ENCODE measurements at regions of chr17 and their contacts with region 1.

Region 1: GRCh38 chr17:75393523-75394331 is 11.8 kb downstream of the GRB2 start:
- DNase-seq: peak; percentile 97
- H3K4me3 Mint-ChIP-seq: peak overlapping the region; percentile 95
- H3K27ac Mint-ChIP-seq: peak overlapping the region; percentile 85
- H3K4me1 Mint-ChIP-seq: peaks cover 38% of the 10 kb centered on the region
- H3K27me3 Mint-ChIP-seq: no peaks in the 10 kb centered on the region
- CTCF ChIP-seq: no peak

Region 2: GRCh38 chr17:75271233-75271954 is 122.3 kb before region 1 on chr17:
- CTCF ChIA-PET with region 1: interaction called, 5 read pairs
- POLR2A ChIA-PET with region 1: interaction called, 23 read pairs
- intact Hi-C with region 1: no loop called
- DNase-seq: peak; percentile 74
- H3K4me3 Mint-ChIP-seq: peak overlapping the region; percentile 74
- H3K27ac Mint-ChIP-seq: peak overlapping the region; percentile 39
- H3K4me1 Mint-ChIP-seq: peaks cover 23% of the 10 kb centered on the region
- H3K27me3 Mint-ChIP-seq: no peaks in the 10 kb centered on the region
- CTCF ChIP-seq: peak; percentile 67

Region 3: GRCh38 chr17:75319904-75320691 is 73.6 kb before region 1 on chr17:
- CTCF ChIA-PET with region 1: interaction called, 9 read pairs
- POLR2A ChIA-PET with region 1: interaction called, 15 read pairs
- intact Hi-C with region 1: no loop called
- DNase-seq: no peak
- H3K4me3 Mint-ChIP-seq: no peak overlapping the region
- H3K27ac Mint-ChIP-seq: no peak overlapping the region
- H3K4me1 Mint-ChIP-seq: no peaks in the 10 kb centered on the region
- H3K27me3 Mint-ChIP-seq: no peaks in the 10 kb centered on the region
- CTCF ChIP-seq: no peak

Region 4: GRCh38 chr17:75345514-75346167 is 48.1 kb before region 1 on chr17:
- CTCF ChIA-PET with region 1: interaction called, 4 read pairs
- POLR2A ChIA-PET with region 1: interaction called, 3 read pairs
- intact Hi-C with region 1: loop called (anchors 5 kb)
- DNase-seq: no peak
- H3K4me3 Mint-ChIP-seq: no peak overlapping the region
- H3K27ac Mint-ChIP-seq: no peak overlapping the region
- H3K4me1 Mint-ChIP-seq: peaks cover 15% of the 10 kb centered on the region
- H3K27me3 Mint-ChIP-seq: no peaks in the 10 kb centered on the region
- CTCF ChIP-seq: no peak

Region 5: GRCh38 chr17:75380315-75380714 is 13.4 kb before region 1 on chr17:
- CTCF ChIA-PET with region 1: interaction called, 4 read pairs
- POLR2A ChIA-PET with region 1: interaction called, 61 read pairs
- intact Hi-C with region 1: no loop called
- DNase-seq: no peak
- H3K4me3 Mint-ChIP-seq: no peak overlapping the region
- H3K27ac Mint-ChIP-seq: no peak overlapping the region
- H3K4me1 Mint-ChIP-seq: no peaks in the 10 kb centered on the region
- H3K27me3 Mint-ChIP-seq: no peaks in the 10 kb centered on the region
- CTCF ChIP-seq: no peak

Region 6: GRCh38 chr17:75430159-75430974 is 36.6 kb after region 1 on chr17:
- CTCF ChIA-PET with region 1: no interaction called
- POLR2A ChIA-PET with region 1: no interaction called
- intact Hi-C with region 1: no loop called
- DNase-seq: no peak
- H3K4me3 Mint-ChIP-seq: no peak overlapping the region
- H3K27ac Mint-ChIP-seq: no peak overlapping the region
- H3K4me1 Mint-ChIP-seq: peaks cover 5% of the 10 kb centered on the region
- H3K27me3 Mint-ChIP-seq: no peaks in the 10 kb centered on the region
- CTCF ChIP-seq: no peak

Region 7: DNA sequence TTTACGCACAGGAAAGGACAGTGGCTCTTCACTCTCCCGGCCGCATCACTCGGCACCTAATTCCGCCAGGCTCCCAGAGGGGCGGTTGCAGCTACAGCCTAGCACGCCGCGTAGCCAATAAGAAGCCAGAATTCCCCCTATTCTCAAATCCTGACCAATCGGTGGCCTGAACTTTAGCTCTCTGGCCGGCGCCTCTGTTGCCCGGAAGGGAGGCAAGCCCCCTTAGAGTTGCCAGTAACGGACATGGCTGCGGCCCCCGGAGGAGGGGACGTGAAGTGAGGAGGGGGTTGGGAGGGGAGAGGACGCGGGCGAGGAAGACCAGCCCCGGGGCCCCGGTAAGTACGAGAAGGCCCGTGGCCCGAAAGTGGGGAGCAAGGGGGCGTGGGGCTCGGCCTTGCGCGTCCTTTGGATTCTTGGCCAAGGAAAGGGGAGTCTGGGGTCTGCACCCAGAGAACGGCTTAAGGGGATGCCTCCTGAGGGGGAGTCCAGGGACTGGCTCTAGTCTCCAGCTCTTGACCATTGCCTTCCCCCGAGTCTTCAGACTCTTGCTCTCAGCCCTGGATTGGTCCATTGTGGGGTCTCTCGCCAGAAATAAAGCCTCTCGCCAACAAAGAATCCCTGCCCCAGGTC is 62.8 kb after region 1 on chr17 and contains the start of gene TMEM94:
- CTCF ChIA-PET with region 1: no interaction called
- POLR2A ChIA-PET with region 1: interaction called, 10 read pairs
- intact Hi-C with region 1: no loop called
- DNase-seq: peak; percentile 98
- H3K4me3 Mint-ChIP-seq: peak within 1 kb of the TSS; percentile 86
- H3K27ac Mint-ChIP-seq: peak within 1 kb of the TSS; percentile 90
- H3K4me1 Mint-ChIP-seq: peaks cover 22% of the 10 kb centered on the region
- H3K27me3 Mint-ChIP-seq: no peaks in the 10 kb centered on the region
- CTCF ChIP-seq: no peak
- total RNA-seq, gene TMEM94: 42.8 and 46.5 TPM in 2 replicates

Measured in MCF 10A (cell line).